Calu3 (cell line): ENCODE measurements at regions of chr1 and their contacts with region 1.

Region 1: DNA sequence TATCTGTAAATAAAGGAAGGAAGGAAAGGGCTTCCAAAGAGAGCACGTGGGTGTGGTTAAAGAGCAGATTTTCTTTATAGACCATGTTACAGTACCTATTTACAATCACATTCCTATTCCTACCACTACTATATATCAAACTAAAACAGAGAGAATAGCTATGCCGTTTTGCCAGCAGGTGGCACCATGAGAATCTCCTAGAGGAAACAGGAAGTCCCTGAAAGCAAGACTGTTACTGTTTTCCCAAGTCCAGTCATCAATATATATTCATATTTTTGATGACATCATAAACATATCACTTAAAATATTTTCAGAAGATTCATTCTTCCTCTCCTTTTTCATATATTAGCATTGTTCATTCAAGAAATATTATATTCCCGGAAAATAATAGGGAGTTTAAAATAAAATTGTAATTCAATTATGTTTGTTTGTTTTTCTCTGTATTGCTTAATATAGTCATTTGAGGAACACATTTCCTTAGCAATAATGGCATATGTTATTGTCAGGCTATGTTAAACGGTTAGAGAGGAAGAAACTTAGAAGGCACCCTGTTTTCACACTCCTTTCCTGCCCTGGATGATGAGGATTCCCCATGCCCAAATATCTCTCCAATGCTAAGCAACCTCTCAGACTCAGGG is 6.6 kb downstream of the CCDC190 start:
- DNase-seq: peak; percentile 79
- H3K4me3 Mint-ChIP-seq: no peak overlapping the region
- H3K27ac Mint-ChIP-seq: no peak overlapping the region
- H3K4me1 Mint-ChIP-seq: peaks cover 30% of the 10 kb centered on the region
- H3K27me3 Mint-ChIP-seq: no peaks in the 10 kb centered on the region
- CTCF ChIP-seq: peak; percentile 78

Region 2: GRCh38 chr1:163315773-163316374 is 461.5 kb after region 1 on chr1:
- CTCF ChIA-PET with region 1: interaction called, 7 read pairs
- intact Hi-C with region 1: loop called (anchors 1 kb)
- DNase-seq: peak; percentile 59
- H3K4me3 Mint-ChIP-seq: no peak overlapping the region
- H3K27ac Mint-ChIP-seq: no peak overlapping the region
- H3K4me1 Mint-ChIP-seq: peaks cover 4% of the 10 kb centered on the region
- H3K27me3 Mint-ChIP-seq: no peaks in the 10 kb centered on the region
- CTCF ChIP-seq: peak; percentile 55